Ovary (tissue), 10 donors: ENCODE measurements at regions of chr9 and their contacts with region 1.

Region 1: DNA sequence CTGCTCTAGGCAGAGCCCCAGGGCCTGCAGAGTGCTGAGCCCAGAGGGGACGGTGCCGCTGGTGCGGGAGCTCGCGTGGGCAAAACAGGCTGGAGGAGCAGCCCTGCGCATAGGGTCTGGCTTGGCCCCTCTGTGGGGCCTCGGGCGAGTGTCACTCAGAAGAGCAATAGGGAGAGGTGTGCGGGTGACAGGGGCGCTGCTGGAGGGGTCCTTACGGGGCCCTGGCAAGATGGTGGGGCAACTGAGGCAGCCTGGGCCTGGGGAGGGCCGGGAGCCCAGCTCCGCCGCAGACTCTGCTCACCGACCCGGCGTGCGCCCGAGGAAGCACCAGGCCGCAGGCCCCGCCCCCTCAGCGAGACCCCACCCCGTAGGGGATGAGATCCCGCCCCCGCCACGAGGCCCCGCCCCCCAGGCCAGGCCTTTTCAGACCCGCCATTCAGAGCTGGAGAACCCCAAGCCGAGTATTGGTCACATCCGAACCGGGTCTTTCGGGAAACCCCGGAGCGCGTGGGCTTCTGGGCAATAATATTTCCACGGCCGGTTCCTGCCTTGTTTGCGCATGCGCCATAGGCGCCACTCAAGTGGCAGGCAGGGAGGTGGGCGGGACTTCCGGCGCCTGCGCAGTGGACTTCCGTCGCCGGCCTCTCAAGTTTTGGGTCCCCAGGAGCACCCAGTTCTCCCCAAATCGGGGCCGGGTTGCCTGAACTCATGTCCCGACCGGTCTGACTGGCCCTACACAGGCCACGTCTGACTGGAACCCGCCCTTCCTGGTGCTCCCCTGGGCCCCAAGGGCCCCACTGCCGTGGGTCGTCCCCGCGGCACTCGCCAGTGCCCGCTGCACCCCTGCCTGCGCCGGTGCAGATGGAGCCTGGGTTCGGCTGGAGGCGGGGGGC is 1.3 kb upstream of the RNF208 start:
- DNase-seq: peak; percentile 98
- H3K4me3 ChIP-seq: peak overlapping the region; percentile 50
- H3K27ac ChIP-seq: peak overlapping the region in 1 of 2 donors; percentile 62
- H3K4me1 ChIP-seq: peaks cover 6% of the 10 kb centered on the region
- H3K27me3 ChIP-seq: peaks cover 3% of the 10 kb centered on the region
- CTCF ChIP-seq: no peak
- EP300 ChIP-seq: no peak
- POLR2A ChIP-seq: peak; percentile 26

Region 2: GRCh38 chr9:136790927-136791641 is 432.2 kb before region 1 on chr9 and contains the start of gene TMEM141:
- intact Hi-C with region 1: loop called in 1 of 4 experiments (anchors 10 kb)
- DNase-seq: peak; percentile 100
- H3K4me3 ChIP-seq: peak within 1 kb of the TSS; percentile 77
- H3K27ac ChIP-seq: peak within 1 kb of the TSS; percentile 78 to 82
- H3K4me1 ChIP-seq: peaks cover 10% of the 10 kb centered on the region
- H3K27me3 ChIP-seq: no peaks in the 10 kb centered on the region
- CTCF ChIP-seq: no peak
- EP300 ChIP-seq: no peak
- POLR2A ChIP-seq: peak; percentile 36
- total RNA-seq, gene TMEM141: 43.1 to 115 (median 64.8) TPM

Region 3: GRCh38 chr9:137114610-137115391 is 108.5 kb before region 1 on chr9 and contains the start of gene DPP7:
- intact Hi-C with region 1: loop called in 2 of 4 experiments (anchors 5 kb)
- DNase-seq: peak; percentile 65 to 79 (median 67)
- H3K4me3 ChIP-seq: peak within 1 kb of the TSS; percentile 58
- H3K27ac ChIP-seq: no peak within 1 kb of the TSS
- H3K4me1 ChIP-seq: peaks cover 4% of the 10 kb centered on the region
- H3K27me3 ChIP-seq: no peaks in the 10 kb centered on the region
- CTCF ChIP-seq: no peak
- EP300 ChIP-seq: no peak
- POLR2A ChIP-seq: no peak
- total RNA-seq, gene DPP7: 39.8 to 117 (median 95.6) TPM

Region 4: GRCh38 chr9:137129456-137130175 is 93.7 kb before region 1 on chr9:
- intact Hi-C with region 1: loop called in 1 of 4 experiments (anchors 5 kb)
- DNase-seq: peak; percentile 64 to 88 (median 75)
- H3K4me3 ChIP-seq: peak overlapping the region; percentile 65
- H3K27ac ChIP-seq: peak overlapping the region in 1 of 2 donors; percentile 31
- H3K4me1 ChIP-seq: peaks cover 12% of the 10 kb centered on the region
- H3K27me3 ChIP-seq: no peaks in the 10 kb centered on the region
- CTCF ChIP-seq: no peak
- EP300 ChIP-seq: no peak
- POLR2A ChIP-seq: no peak

Region 5: DNA sequence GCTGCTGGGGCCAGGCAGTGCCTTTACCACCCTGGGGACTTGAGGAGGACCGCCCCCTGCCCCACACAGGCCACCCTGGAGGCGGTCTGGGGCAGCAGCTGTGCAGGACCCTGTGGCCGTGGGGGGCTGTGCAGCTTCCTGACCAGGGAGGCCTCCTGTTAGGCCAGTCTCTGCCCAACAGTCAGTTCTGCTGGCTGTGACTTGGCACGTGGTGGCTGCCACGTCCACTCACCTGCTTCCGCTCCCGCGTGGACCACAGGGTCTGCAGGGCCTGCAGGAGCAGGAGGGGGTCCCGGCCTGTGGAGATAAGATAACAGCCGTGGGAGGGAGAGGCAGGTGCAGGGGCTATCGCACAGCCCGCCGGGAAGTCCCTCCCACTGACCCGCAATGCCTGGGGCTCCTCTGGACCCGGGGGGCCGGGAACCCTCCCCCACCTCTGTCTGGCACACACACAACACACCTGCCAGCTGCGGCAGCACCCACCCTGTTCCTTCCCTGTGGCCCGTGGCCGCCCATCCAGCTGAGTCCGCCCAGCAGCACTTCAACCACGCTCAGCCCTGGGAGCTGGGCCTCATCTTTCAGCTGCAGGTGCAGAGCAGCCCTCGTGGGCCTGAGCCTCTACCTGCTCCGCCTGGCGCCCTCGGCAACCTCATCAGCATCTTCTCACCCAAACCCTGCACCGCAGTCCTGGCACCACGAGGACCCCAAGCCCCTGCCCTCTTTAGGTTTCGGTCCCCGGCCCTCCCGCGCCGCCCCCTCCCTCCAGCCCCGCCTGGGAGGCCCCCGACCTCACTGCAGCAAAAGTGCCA is 160.0 kb after region 1 on chr9:
- intact Hi-C with region 1: no loop called
- DNase-seq: peak in 4 of 5 donors; percentile 12 to 25 (median 16)
- H3K4me3 ChIP-seq: no peak overlapping the region
- H3K27ac ChIP-seq: no peak overlapping the region
- H3K4me1 ChIP-seq: no peaks in the 10 kb centered on the region
- H3K27me3 ChIP-seq: no peaks in the 10 kb centered on the region
- CTCF ChIP-seq: no peak
- EP300 ChIP-seq: no peak
- POLR2A ChIP-seq: no peak